ENCODE measurements at regions of chr11 and their contacts with region 1.

Region 1: GRCh38 chr11:122273476-122274191 is 157.6 kb upstream of the BLID start:
- DNase-seq: no peak
- ATAC-seq: no peak
- H3K4me3 ChIP-seq: no peak overlapping the region
- H3K27ac ChIP-seq: no peak overlapping the region
- H3K4me1 ChIP-seq: no peaks in the 10 kb centered on the region
- H3K27me3 ChIP-seq: no peaks in the 10 kb centered on the region
- CTCF ChIP-seq: no peak

Region 2: DNA sequence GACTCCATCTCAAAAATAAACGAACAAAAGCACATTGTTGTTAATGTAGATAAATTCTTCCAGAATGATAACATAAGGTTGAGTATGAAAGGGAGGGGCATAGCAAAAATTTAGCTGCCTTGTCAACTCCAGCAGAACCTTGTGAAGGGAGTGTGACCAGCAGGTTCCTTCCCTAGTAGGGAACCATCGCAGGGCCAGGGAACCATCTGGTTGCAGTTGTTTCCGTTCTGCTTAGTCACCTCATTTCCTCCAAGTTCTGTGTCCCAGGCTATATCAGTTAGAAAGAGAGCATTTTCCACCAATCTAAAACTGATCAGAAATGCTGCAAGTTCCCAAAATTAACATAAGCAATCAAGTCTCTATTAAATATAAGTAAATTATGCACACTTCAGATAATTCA is 30.9 kb before region 1 on chr11:
- intact Hi-C with region 1: loop called in 1 of 2 experiments (anchors 1 kb)
- DNase-seq: no peak
- ATAC-seq: no peak
- H3K4me3 ChIP-seq: no peak overlapping the region
- H3K27ac ChIP-seq: no peak overlapping the region
- H3K4me1 ChIP-seq: peaks cover 24% of the 10 kb centered on the region
- H3K27me3 ChIP-seq: no peaks in the 10 kb centered on the region
- CTCF ChIP-seq: no peak